ENCODE measurements at regions of chr5 and their contacts with region 1.

Region 1: DNA sequence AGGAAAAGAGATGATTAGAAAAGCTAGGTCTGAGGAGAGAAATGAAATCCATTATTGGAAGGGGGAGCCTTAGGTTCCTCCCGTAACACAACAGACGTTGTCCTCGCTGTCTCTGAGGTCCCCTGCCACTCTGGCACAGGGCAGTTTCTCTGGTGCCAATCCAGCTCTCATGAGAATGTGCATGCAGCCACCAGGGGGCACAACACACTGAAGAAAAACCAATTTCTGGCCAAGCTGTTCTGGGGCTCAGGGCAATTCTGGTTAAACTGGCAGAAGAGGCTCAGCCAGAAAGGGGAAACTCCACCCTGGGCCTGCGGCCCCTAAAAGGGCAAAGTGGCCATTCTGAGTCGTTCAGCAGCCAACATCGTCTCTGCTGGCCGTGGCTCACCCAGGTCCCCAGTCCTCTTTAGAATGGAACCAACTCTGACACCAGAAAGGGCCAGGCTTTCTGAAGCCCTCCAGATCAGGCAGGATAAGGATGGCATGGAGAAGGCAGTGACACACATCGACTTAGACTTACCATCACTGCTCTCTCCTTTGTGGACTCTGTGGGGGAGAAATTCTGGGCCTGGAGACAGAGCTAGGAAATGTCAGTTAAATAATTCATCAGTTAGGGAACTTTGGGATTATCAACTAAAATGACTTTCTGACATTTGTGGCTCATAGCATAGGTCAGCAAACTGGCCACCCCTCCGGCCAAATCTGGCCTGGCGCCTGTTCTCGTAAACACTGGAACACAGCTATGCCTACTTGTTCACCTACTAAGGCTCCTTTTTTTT is 58.5 kb upstream of the GOLPH3 start:
- DNase-seq: peak; percentile 19 to 86
- H3K4me3 ChIP-seq: no peak overlapping the region
- H3K27ac ChIP-seq: no peak overlapping the region
- H3K4me1 ChIP-seq: peaks cover 0 to 3% (median 1%) of the 10 kb centered on the region in 4 experiments; a peak in 2 of 7 replicates
- H3K27me3 ChIP-seq: no peaks in the 10 kb centered on the region
- CTCF ChIP-seq: peak; percentile 72 to 87 (median 81)
- EP300 ChIP-seq: no peak
- POLR2A ChIP-seq: no peak
- RAD21 ChIP-seq: peak; percentile 82 to 87

Region 2: GRCh38 chr5:32217886-32218396 is 14.7 kb before region 1 on chr5:
- CTCF ChIA-PET with region 1: interaction called, 14 read pairs
- POLR2A ChIA-PET with region 1: interaction called, 3 read pairs
- DNase-seq: no peak
- H3K4me3 ChIP-seq: no peak overlapping the region
- H3K27ac ChIP-seq: no peak overlapping the region
- H3K4me1 ChIP-seq: no peaks in the 10 kb centered on the region
- H3K27me3 ChIP-seq: no peaks in the 10 kb centered on the region
- CTCF ChIP-seq: no peak
- EP300 ChIP-seq: no peak
- POLR2A ChIP-seq: no peak
- RAD21 ChIP-seq: no peak

Region 3: DNA sequence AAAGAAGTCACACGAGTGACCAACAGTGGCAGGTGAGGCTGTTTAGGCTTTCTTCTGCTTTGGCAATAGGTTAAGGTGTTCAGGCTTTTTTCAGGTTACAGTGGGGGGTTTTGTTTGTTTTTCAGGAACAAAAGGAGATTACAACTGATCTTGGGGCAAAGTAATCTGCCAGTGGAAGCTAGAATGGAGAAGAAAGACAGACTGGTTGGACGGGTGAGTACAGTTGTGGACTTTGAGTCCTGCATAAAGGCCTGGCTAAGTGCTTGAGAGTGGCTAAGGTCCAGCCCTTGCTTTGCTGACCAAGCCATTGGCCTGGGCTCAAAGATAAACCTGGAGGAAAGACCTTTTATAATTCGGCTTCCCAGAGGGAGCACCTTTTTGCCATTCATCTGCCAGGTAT is 17.0 kb after region 1 on chr5:
- CTCF ChIA-PET with region 1: interaction called, 36 read pairs
- POLR2A ChIA-PET with region 1: no interaction called
- DNase-seq: no peak
- H3K4me3 ChIP-seq: no peak overlapping the region
- H3K27ac ChIP-seq: no peak overlapping the region
- H3K4me1 ChIP-seq: no peaks in the 10 kb centered on the region
- H3K27me3 ChIP-seq: no peaks in the 10 kb centered on the region
- CTCF ChIP-seq: no peak
- EP300 ChIP-seq: no peak
- POLR2A ChIP-seq: no peak
- RAD21 ChIP-seq: no peak

Region 4: DNA sequence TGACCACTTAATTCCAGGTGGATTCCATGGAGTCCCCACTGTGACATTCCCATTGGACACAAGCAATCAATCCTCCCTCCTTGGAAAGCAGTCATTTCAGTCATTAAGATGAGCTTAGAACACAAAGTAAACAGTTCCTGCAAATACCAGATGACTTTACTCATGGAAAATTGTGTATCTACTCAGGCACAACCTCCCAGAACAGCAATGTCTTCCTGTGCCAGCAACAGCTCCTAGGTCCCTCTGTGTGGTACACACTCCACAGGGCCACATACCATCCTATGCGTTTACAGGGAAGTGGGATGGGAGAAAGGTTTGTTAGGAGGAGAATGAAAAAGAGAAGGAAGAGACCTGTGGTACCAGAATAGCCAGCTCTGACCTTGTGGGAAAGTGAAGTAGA is 26.4 kb after region 1 on chr5:
- CTCF ChIA-PET with region 1: interaction called, 11 read pairs
- POLR2A ChIA-PET with region 1: no interaction called
- DNase-seq: no peak
- H3K4me3 ChIP-seq: no peak overlapping the region
- H3K27ac ChIP-seq: no peak overlapping the region
- H3K4me1 ChIP-seq: no peaks in the 10 kb centered on the region
- H3K27me3 ChIP-seq: no peaks in the 10 kb centered on the region
- CTCF ChIP-seq: no peak
- EP300 ChIP-seq: no peak
- POLR2A ChIP-seq: no peak
- RAD21 ChIP-seq: no peak

Region 5: GRCh38 chr5:32312647-32313523 is 80.3 kb after region 1 on chr5 and contains the start of gene MTMR12:
- CTCF ChIA-PET with region 1: interaction called, 87 read pairs
- POLR2A ChIA-PET with region 1: no interaction called
- DNase-seq: peak; percentile 99 to 100
- H3K4me3 ChIP-seq: peak within 1 kb of the TSS; percentile 79 to 80 (median 79)
- H3K27ac ChIP-seq: peak within 1 kb of the TSS; percentile 70; the same call in 1 of the 2 replicates
- H3K4me1 ChIP-seq: peaks cover 0 to 8% (median 4%) of the 10 kb centered on the region in 4 experiments; a peak in 5 of 7 replicates
- H3K27me3 ChIP-seq: no peaks in the 10 kb centered on the region
- CTCF ChIP-seq: no peak
- EP300 ChIP-seq: no peak
- POLR2A ChIP-seq: peak; percentile 89 to 91
- RAD21 ChIP-seq: no peak
- total RNA-seq, gene MTMR12: 49.3 and 59.3 TPM in 2 replicates

Region 6: GRCh38 chr5:32365623-32366022 is 133.0 kb after region 1 on chr5:
- CTCF ChIA-PET with region 1: interaction called, 20 read pairs
- POLR2A ChIA-PET with region 1: no interaction called
- DNase-seq: no peak
- H3K4me3 ChIP-seq: no peak overlapping the region
- H3K27ac ChIP-seq: no peak overlapping the region
- H3K4me1 ChIP-seq: no peaks in the 10 kb centered on the region; a peak in 1 of 7 replicates
- H3K27me3 ChIP-seq: no peaks in the 10 kb centered on the region
- CTCF ChIP-seq: no peak
- EP300 ChIP-seq: no peak
- POLR2A ChIP-seq: no peak
- RAD21 ChIP-seq: no peak

Measured in H1 (cell line).